ENCODE measurements at regions of chr1 and their contacts with region 1.

Region 1: DNA sequence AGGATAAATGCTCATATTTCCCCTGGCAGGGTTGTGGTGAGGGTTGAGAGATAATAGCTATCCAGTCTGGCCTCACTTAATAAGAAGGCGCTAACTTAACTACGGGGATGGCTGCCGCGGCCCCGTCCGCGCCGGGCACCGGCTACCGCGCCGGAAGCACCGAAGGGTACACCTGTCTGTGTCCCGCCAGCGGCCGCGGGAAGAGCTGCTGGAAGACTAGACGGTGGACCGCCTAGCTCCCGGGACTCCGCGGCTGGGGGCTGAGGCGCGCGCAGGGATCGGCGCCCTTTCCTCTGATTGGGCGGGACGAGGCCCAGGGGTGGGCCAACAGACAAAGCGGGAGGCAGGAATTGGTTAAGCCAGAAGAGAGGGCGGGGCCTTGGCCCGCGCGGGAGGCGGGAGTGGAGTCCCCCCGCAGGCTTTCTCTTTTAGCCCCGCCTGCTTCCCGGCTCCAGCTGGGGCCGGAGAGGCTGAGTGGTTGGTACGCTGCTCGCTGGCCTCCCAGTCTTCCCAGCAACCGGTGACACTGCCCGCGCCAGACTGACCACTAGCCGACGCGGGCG is at the start of gene ZNF672:
- DNase-seq: peak; percentile 96
- H3K4me3 Mint-ChIP-seq: no peak within 1 kb of the TSS
- H3K27ac Mint-ChIP-seq: peak within 1 kb of the TSS; percentile 97
- H3K4me1 Mint-ChIP-seq: peaks cover 24% of the 10 kb centered on the region
- H3K27me3 Mint-ChIP-seq: peaks cover 2% of the 10 kb centered on the region
- total RNA-seq, gene ZNF672: 46.5 to 56.9 TPM

Region 2: GRCh38 chr1:248703674-248704073 is 134.2 kb before region 1 on chr1:
- CTCF ChIA-PET with region 1: no interaction called
- POLR2A ChIA-PET with region 1: no interaction called
- DNase-seq: no peak
- H3K4me3 Mint-ChIP-seq: no peak overlapping the region
- H3K27ac Mint-ChIP-seq: no peak overlapping the region
- H3K4me1 Mint-ChIP-seq: no peaks in the 10 kb centered on the region
- H3K27me3 Mint-ChIP-seq: peaks cover 4% of the 10 kb centered on the region

Region 3: DNA sequence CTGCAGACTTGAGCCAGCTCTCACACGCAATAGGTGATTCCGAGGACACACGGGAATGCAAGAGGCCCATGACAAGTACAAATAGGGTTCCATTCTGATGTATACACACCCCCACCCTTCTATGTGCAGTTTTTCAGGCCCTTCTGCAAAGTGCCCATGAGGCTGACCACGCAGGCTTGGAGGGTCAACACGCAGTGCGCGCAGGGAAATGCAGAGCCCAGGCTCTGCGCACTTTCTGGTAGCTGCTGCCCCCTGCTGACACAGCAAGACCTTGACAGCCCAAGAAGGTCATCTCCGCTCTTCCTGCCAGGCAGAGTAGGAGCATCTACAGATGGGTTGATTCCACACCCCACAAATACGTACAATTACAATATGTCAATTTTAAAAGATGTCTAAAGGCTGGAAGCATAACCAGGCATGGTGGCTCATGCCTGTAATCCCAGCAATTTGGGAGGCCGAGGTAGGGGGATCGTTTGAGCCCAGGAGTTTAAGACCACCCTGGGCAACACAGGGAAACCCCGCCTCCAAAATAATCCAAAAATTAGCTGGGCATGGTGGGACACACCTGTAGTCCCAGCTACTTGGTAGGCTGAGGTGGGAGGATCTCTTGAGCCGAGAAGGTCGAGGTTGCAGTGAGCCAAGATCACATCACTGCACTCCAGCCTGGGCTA is 30.7 kb before region 1 on chr1:
- CTCF ChIA-PET with region 1: no interaction called
- POLR2A ChIA-PET with region 1: no interaction called
- DNase-seq: peak; percentile 68
- H3K4me3 Mint-ChIP-seq: no peak overlapping the region
- H3K27ac Mint-ChIP-seq: no peak overlapping the region
- H3K4me1 Mint-ChIP-seq: peaks cover 8% of the 10 kb centered on the region
- H3K27me3 Mint-ChIP-seq: no peaks in the 10 kb centered on the region

Region 4: DNA sequence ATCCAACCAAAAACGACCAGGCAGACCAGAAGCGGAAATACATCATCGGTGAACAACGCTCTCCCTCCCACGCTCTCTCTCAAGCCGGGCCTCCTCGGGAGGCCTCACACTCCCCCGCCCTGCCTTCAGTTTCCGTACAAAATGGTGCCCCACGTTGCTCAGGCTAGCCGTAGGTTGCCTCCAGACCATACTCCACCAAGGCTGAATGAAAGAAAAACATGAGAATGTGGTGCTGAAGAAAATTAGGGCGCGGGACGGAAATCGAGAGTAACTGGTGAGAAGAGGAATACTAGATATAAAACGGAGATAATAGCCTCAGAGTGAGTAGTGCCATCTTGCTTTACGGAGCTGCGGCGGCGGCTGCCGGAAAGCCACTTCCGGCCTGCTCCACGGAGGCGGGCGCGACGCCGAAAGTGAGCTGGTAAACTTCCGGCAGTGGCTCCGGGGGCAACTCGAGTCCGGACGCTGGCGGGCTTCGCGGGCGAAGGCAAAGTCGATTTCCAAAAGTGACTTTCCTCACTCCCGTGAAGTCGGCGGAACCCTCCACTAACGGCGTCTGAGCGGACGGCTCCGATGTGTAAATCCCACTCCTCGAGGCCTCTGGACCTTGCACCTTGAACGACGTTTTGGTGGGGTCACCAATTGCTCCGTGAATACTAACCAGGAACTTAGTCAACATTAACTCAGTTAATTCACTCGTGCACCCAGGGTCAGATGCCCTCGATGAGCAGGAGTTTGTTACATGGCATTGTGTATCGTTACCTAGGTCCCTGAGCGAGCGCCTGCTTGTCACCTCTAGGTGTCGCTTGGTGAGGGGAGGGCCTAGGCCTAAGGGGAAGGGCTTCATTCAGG is 11.7 kb before region 1 on chr1 and contains the start of gene SH3BP5L:
- CTCF ChIA-PET with region 1: interaction called, 41 read pairs
- POLR2A ChIA-PET with region 1: interaction called, 6 read pairs
- DNase-seq: peak; percentile 94
- H3K4me3 Mint-ChIP-seq: peak within 1 kb of the TSS; percentile 90
- H3K27ac Mint-ChIP-seq: peak within 1 kb of the TSS; percentile 98
- H3K4me1 Mint-ChIP-seq: peaks cover 48% of the 10 kb centered on the region
- H3K27me3 Mint-ChIP-seq: peaks cover 2% of the 10 kb centered on the region
- total RNA-seq, gene SH3BP5L: 29.7 to 32.7 TPM

Measured in activated CD4-positive, alpha-beta T cell treated with anti-CD3 and anti-CD28 coated beads, Interleukin-2, amount 10 ng/mL, durations not matched to agents 7 days and 5 days (primary cell).